ENCODE measurements at regions of chr22 and their contacts with region 1.

Region 1: GRCh38 chr22:27885977-27886842 is 32.8 kb downstream of the PITPNB start:
- DNase-seq: peak in 1 of 2 donors; percentile 42
- ATAC-seq: peak in 6 of 8 donors; percentile 38 to 66 (median 56)
- H3K4me3 ChIP-seq: no peak overlapping the region
- H3K27ac ChIP-seq: peak overlapping the region in 7 of 10 donors; percentile 5 to 56 (median 45)
- H3K4me1 ChIP-seq: peaks cover 3 to 68% (median 37%) of the 10 kb centered on the region in 9 donors
- H3K27me3 ChIP-seq: no peaks in the 10 kb centered on the region
- CTCF ChIP-seq: peak; percentile 80 to 92 (median 86)

Region 2: GRCh38 chr22:27836196-27836595 is 50.0 kb before region 1 on chr22:
- intact Hi-C with region 1: no loop called
- DNase-seq: no peak
- ATAC-seq: no peak
- H3K4me3 ChIP-seq: no peak overlapping the region
- H3K27ac ChIP-seq: no peak overlapping the region
- H3K4me1 ChIP-seq: no peaks in the 10 kb centered on the region
- H3K27me3 ChIP-seq: no peaks in the 10 kb centered on the region
- CTCF ChIP-seq: no peak

Region 3: GRCh38 chr22:27990879-27991278 is 104.7 kb after region 1 on chr22:
- intact Hi-C with region 1: loop called in 2 of 10 experiments (anchors 5 kb)
- DNase-seq: peak; percentile 58 to 79
- ATAC-seq: peak; percentile 63 to 89 (median 83)
- H3K4me3 ChIP-seq: peak overlapping the region in 5 of 10 donors; percentile 0 to 27 (median 11)
- H3K27ac ChIP-seq: peak overlapping the region in 9 of 10 donors; percentile 19 to 73 (median 50)
- H3K4me1 ChIP-seq: peaks cover 0 to 30% (median 17%) of the 10 kb centered on the region in 9 donors
- H3K27me3 ChIP-seq: no peaks in the 10 kb centered on the region
- CTCF ChIP-seq: peak; percentile 46 to 70 (median 61)

Region 4: DNA sequence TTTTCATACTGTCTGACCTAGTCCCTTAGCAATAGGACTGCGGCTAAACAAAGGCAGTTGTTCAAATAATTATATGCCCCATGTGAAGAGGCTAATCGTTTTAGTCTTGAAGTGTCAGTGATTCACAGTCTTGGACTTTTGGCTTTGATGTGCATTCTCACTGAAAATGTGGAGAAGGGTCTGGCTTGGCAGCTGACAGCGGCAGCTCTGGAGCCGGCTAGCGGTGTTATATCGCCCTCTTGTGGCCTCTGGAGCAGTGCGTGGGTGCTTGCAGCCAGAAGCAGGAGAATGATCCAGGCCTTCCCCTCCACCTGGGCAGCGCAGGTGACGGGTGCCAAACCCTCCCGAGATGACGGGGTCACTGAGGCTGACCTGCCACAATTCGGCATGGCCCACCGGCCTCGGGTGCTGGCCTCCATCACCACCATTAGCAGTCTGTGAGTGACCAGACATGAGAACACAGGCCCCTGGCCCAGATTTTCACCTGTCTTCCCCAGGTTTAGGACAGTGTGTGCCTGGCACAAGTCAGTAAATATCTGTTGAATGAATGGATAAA is 123.1 kb after region 1 on chr22:
- intact Hi-C with region 1: loop called (anchors 1 to 5 kb)
- DNase-seq: peak; percentile 75 to 77
- ATAC-seq: peak; percentile 73 to 83 (median 78)
- H3K4me3 ChIP-seq: no peak overlapping the region
- H3K27ac ChIP-seq: no peak overlapping the region
- H3K4me1 ChIP-seq: peaks cover 0 to 30% (median 17%) of the 10 kb centered on the region in 9 donors
- H3K27me3 ChIP-seq: no peaks in the 10 kb centered on the region
- CTCF ChIP-seq: peak; percentile 86 to 99 (median 98)

Measured in heart right ventricle (tissue), 16 donors.